ENCODE measurements at regions of chr13 and their contacts with region 1.

Region 1: DNA sequence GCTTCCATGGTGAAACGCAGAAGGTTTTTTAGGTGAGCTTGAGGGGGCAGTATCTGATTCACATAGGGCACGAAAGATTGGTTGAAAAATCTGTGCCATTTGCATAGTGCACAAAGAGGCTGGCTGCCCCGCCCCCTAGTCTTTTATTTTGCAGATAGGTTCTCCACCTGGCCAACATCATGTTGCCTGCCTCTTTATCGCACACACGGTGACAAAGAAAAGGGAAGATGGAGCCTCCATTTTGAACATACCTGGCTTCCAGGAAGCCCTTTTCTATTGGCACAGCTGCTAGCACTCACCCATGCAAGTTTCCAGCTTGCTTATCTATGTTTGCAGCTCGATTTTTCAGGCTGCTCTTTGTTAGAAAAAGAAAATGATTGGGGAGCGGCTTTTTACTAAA is 316.2 kb upstream of the KLHL1 start:
- DNase-seq: no peak
- ATAC-seq: no peak
- H3K4me3 ChIP-seq: no peak overlapping the region
- H3K4me3 Mint-ChIP-seq: no peak overlapping the region
- H3K27ac ChIP-seq: no peak overlapping the region
- H3K27ac Mint-ChIP-seq: no peak overlapping the region
- H3K4me1 ChIP-seq: no peaks in the 10 kb centered on the region
- H3K4me1 Mint-ChIP-seq: no peaks in the 10 kb centered on the region
- H3K27me3 ChIP-seq: no peaks in the 10 kb centered on the region
- H3K27me3 Mint-ChIP-seq: no peaks in the 10 kb centered on the region
- CTCF ChIP-seq: no peak

Region 2: DNA sequence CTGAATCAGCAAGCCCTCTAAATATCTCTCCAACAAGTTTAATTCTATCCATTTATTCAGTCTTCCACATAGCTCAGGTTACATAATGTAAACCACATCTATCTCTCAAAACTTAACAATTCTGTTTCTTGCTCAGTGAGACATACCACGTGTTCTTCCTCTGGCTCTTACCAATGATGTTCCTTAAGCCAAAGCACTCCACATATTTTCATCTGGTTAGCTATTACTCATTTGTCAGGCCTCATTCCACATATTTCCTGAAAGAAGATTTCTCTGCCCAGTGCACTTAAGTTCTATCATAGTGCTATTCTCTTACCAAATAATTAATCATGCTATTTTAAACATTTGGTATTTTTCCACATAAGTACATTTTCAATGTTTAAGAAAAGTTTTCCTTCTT is 720.1 kb before region 1 on chr13:
- CTCF ChIA-PET with region 1: no interaction called
- POLR2A ChIA-PET with region 1: no interaction called
- intact Hi-C with region 1: loop called in 1 of 2 experiments (anchors 10 kb)
- DNase-seq: no peak
- ATAC-seq: no peak
- H3K4me3 ChIP-seq: no peak overlapping the region
- H3K4me3 Mint-ChIP-seq: no peak overlapping the region
- H3K27ac ChIP-seq: no peak overlapping the region
- H3K27ac Mint-ChIP-seq: no peak overlapping the region
- H3K4me1 ChIP-seq: no peaks in the 10 kb centered on the region
- H3K4me1 Mint-ChIP-seq: no peaks in the 10 kb centered on the region
- H3K27me3 ChIP-seq: no peaks in the 10 kb centered on the region
- H3K27me3 Mint-ChIP-seq: no peaks in the 10 kb centered on the region
- CTCF ChIP-seq: no peak

Region 3: DNA sequence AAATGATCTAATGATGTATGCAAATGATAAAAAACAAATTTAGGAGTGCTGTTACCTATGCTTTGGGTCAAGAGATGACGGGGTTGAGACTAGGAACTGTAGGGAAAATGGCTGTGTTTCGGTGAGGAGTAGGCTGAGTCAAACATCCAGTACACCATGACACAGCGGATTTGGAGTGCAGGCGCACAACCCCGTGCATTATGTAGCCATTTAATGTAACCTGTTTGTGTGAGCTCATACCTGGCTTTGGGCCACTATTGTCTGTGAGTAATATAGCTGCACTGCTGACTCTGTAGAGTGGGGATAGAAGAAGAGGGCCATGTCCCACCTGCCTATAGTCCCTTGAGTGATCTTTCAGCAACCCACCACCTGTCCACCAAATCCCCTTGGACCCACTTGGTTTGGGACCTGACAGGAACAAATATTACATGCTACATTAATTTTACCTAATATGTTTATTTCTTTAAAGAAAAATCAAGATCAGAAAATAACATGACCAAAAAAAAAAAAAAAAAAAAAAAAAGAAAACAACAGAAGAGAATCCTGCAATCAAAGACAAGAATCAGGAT is 220.7 kb before region 1 on chr13:
- CTCF ChIA-PET with region 1: no interaction called
- POLR2A ChIA-PET with region 1: no interaction called
- intact Hi-C with region 1: no loop called
- DNase-seq: peak in 2 of 9 experiments; percentile 0 to 6
- ATAC-seq: no peak
- H3K4me3 ChIP-seq: no peak overlapping the region
- H3K4me3 Mint-ChIP-seq: no peak overlapping the region
- H3K27ac ChIP-seq: no peak overlapping the region
- H3K27ac Mint-ChIP-seq: no peak overlapping the region
- H3K4me1 ChIP-seq: no peaks in the 10 kb centered on the region
- H3K4me1 Mint-ChIP-seq: no peaks in the 10 kb centered on the region
- H3K27me3 ChIP-seq: no peaks in the 10 kb centered on the region
- H3K27me3 Mint-ChIP-seq: no peaks in the 10 kb centered on the region
- CTCF ChIP-seq: no peak

Region 4: GRCh38 chr13:70391678-70392077 is 32.8 kb before region 1 on chr13:
- CTCF ChIA-PET with region 1: no interaction called
- POLR2A ChIA-PET with region 1: no interaction called
- intact Hi-C with region 1: no loop called
- DNase-seq: no peak
- ATAC-seq: no peak
- H3K4me3 ChIP-seq: no peak overlapping the region
- H3K4me3 Mint-ChIP-seq: no peak overlapping the region
- H3K27ac ChIP-seq: no peak overlapping the region
- H3K27ac Mint-ChIP-seq: no peak overlapping the region
- H3K4me1 ChIP-seq: no peaks in the 10 kb centered on the region
- H3K4me1 Mint-ChIP-seq: no peaks in the 10 kb centered on the region
- H3K27me3 ChIP-seq: no peaks in the 10 kb centered on the region
- H3K27me3 Mint-ChIP-seq: no peaks in the 10 kb centered on the region
- CTCF ChIP-seq: no peak